ENCODE measurements at regions of chr11 and their contacts with region 1.

Region 1: GRCh38 chr11:38206663-38207062 is 1608.6 kb upstream of the RAG2 start:
- DNase-seq: no peak
- H3K4me3 ChIP-seq: no peak overlapping the region
- H3K27ac ChIP-seq: no peak overlapping the region
- H3K4me1 ChIP-seq: no peaks in the 10 kb centered on the region
- H3K27me3 ChIP-seq: no peaks in the 10 kb centered on the region
- CTCF ChIP-seq: no peak
- POLR2A ChIP-seq: no peak

Region 2: GRCh38 chr11:38246451-38246850 is 39.8 kb after region 1 on chr11:
- intact Hi-C with region 1: no loop called
- DNase-seq: no peak
- H3K4me3 ChIP-seq: no peak overlapping the region
- H3K27ac ChIP-seq: no peak overlapping the region
- H3K4me1 ChIP-seq: no peaks in the 10 kb centered on the region
- H3K27me3 ChIP-seq: no peaks in the 10 kb centered on the region
- CTCF ChIP-seq: no peak
- POLR2A ChIP-seq: no peak

Region 3: DNA sequence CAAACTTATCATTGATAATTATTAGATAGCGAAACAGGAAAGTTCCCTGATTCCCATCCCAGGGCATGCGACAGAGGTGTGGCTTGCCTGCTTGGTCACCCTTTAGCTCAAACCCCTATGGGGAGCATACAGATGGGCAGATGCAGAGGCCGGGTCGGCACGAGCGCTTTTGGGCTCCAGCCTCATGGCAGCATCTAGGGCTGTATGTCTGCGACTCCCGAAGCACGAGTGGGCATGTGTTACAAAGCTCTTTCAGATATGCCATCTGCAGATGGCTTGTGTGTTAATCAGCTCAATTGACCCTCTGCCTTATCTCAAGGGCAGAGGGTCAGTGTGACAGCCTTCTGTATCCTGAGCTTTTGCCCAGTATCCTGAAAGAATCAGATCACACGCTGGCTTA is 460.7 kb after region 1 on chr11:
- intact Hi-C with region 1: loop called (anchors 5 kb)
- DNase-seq: no peak
- H3K4me3 ChIP-seq: no peak overlapping the region
- H3K27ac ChIP-seq: no peak overlapping the region
- H3K4me1 ChIP-seq: no peaks in the 10 kb centered on the region
- H3K27me3 ChIP-seq: no peaks in the 10 kb centered on the region
- CTCF ChIP-seq: no peak
- POLR2A ChIP-seq: no peak

Region 4: DNA sequence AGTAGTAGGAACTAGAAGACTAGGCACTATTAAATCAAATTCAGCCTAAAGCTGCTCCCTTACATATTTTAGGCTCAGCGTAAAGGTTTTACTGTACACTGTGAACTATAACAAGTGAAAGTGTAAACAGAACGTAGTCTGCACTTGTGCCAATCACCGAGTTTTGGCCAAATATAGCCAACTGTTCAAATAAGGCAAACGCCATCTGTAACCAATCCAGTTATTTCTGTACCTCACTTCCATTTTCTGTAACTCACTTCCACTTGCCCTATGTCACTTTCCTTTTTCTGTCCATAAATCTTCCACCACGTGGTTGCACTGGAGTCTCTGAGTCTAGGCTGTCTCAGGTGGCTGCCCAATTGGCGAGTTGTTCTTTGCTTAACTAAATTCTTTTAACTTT is 1120.6 kb after region 1 on chr11:
- intact Hi-C with region 1: no loop called
- DNase-seq: no peak
- H3K4me3 ChIP-seq: no peak overlapping the region
- H3K27ac ChIP-seq: no peak overlapping the region
- H3K4me1 ChIP-seq: no peaks in the 10 kb centered on the region
- H3K27me3 ChIP-seq: no peaks in the 10 kb centered on the region
- CTCF ChIP-seq: no peak
- POLR2A ChIP-seq: no peak